Left lung (tissue), 14 donors: ENCODE measurements at regions of chr18 and their contacts with region 1.

Region 1: DNA sequence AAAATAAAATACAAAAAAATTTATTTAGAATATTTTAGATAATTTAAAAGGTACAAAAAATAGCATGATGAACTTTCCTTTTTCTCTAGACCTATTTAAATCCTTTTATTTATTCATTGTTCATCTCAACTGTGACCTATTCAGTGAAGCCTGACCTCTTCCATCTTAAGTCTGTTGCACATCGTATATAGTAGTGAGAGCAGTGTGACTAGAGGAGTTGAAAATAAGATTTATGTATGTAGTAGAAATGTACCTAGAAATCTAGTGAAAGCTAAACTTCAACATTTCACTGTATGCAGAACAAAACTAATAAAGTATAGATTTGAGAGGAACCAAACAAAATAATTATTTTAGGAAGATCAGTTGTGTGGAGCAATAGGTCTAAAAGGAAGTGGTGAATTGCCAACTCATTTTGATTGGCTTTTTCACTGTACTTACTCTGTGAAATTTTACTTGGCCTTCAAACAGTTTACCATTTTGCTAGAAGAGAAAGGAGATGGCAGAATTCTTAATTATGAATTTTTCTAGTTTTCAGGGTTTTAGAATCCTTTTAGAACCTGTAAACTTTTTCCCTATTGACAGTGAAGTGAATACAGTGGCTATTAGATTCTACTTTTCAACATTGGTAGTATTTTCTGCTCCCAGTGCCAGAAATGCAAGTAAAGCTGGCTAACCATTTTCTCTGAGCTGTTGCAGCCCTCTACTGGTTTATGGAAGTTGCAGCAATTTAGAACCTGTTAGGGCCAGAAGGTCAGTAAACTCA is 11.0 kb downstream of the ANKRD12 start:
- DNase-seq: peak in 2 of 4 donors; percentile 38 to 73
- ATAC-seq: peak; percentile 95
- H3K4me3 ChIP-seq: no peak overlapping the region
- H3K27ac ChIP-seq: peak overlapping the region; percentile 20 to 71
- H3K4me1 ChIP-seq: peaks cover 13 to 100% of the 10 kb centered on the region in 2 donors
- H3K27me3 ChIP-seq: no peaks in the 10 kb centered on the region
- CTCF ChIP-seq: peak; percentile 49 to 60

Region 2: GRCh38 chr18:9017170-9017904 is 130.3 kb before region 1 on chr18:
- intact Hi-C with region 1: no loop called
- DNase-seq: peak; percentile 11 to 88 (median 54)
- ATAC-seq: peak; percentile 93
- H3K4me3 ChIP-seq: no peak overlapping the region
- H3K27ac ChIP-seq: peak overlapping the region; percentile 66 to 75
- H3K4me1 ChIP-seq: peaks cover 4 to 14% of the 10 kb centered on the region in 2 donors
- H3K27me3 ChIP-seq: no peaks in the 10 kb centered on the region
- CTCF ChIP-seq: no peak

Region 3: GRCh38 chr18:9082711-9083510 is 64.7 kb before region 1 on chr18:
- intact Hi-C with region 1: loop called in 1 of 2 experiments (anchors 10 kb)
- DNase-seq: no peak
- ATAC-seq: peak; percentile 82
- H3K4me3 ChIP-seq: no peak overlapping the region
- H3K27ac ChIP-seq: peak overlapping the region; percentile 74
- H3K4me1 ChIP-seq: peaks cover 9 to 46% of the 10 kb centered on the region in 2 donors
- H3K27me3 ChIP-seq: no peaks in the 10 kb centered on the region
- CTCF ChIP-seq: no peak